Activated B cell treated with CpG ODN at 0.5 μM for 24 hours (primary cell): ENCODE measurements at regions of chr14 and their contacts with region 1.

Region 1: DNA sequence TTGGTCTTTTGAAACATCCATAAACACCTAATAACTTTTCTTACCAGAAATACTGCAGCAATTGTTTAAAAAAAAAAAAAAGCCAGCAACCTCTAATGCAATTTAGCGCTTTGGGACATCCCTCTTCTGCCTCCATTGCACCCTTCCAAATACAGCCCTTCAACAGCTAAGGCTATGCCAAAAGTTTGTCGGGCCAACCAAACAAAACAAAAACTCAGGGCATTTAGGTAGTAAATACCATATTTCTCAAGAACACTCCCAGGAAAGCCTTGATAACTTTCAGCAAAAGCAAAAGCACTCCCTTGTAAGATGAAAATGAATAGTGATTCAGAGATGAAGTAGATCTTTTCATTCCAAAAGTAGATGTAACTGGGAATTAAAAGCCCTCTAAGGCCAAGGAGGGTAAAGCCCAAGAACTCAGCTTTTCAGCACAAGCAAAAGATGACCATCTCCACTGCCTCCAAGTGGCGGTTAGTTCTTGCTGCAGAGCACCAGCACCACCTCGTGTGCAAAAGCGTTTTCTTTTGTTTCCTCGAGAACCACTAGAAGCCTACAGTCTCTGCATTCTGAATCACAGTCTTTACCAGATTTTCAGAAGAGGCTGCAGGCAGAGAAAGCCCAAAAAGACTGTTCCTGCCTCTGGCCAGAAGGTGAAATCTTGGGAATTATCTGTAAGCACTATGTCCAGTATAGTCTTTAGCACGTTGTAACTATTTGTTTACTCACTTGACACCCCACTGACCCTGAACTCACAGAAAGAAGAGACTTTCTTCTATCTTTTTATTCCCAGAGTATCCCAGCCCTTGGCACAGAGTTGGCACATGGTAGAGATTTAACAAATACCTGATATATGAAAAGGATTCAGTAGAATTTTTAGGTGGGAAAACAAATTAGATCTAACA is 53.1 kb downstream of the SIX6 start:
- DNase-seq: no peak
- ATAC-seq: no peak
- H3K4me3 Mint-ChIP-seq: no peak overlapping the region
- H3K27ac Mint-ChIP-seq: no peak overlapping the region
- H3K4me1 Mint-ChIP-seq: peaks cover 4% of the 10 kb centered on the region
- H3K27me3 Mint-ChIP-seq: peaks cover 2% of the 10 kb centered on the region
- CTCF ChIP-seq: no peak

Region 2: DNA sequence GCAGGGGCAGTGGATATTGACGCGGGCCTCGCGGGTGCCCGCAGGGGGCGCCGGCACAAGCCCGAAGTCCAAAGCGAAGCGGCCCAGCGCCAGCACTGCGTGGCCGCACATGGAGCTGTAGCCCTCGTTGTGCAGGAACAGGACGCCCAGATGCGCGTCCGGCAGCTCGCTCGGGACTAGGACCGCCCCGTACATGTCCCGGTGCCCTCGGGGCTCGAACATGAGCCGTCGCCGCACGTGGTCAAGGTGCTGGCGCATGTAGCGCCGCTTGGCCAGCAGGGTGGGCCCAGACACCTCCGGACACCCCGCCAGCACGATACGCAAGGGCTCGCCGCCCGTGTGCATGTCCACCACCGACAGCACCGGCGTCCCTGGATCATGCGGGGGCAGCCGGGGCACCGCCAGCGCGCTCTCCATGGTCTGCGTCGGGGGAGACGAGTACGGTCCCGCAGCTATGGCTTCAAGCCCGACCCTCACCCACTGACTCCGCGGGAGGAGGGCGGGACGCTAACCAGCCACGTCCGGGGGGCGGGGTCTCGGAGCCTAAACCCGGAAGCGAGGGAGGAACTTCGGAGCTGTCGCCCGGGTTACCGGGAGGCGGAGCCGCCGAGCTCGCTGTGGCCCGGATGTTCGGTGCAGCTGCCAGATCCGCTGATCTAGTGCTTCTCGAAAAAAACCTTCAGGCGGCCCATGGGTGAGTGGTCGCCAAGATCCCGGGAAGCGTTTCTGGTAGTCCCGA is 1078.0 kb before region 1 on chr14 and contains the starts of genes JKAMP and L3HYPDH:
- CTCF ChIA-PET with region 1: no interaction called
- POLR2A ChIA-PET with region 1: no interaction called
- intact Hi-C with region 1: no loop called
- DNase-seq: peak; percentile 96
- ATAC-seq: peak; percentile 92
- H3K4me3 Mint-ChIP-seq: peak within 1 kb of the TSS; percentile 98
- H3K27ac Mint-ChIP-seq: peak within 1 kb of the TSS; percentile 96
- H3K4me1 Mint-ChIP-seq: peaks cover 52% of the 10 kb centered on the region
- H3K27me3 Mint-ChIP-seq: no peaks in the 10 kb centered on the region
- CTCF ChIP-seq: no peak
- total RNA-seq, gene JKAMP: 18.1 and 28.8 TPM in 2 replicates
- total RNA-seq, gene L3HYPDH: 22.1 and 30.2 TPM in 2 replicates

Region 3: GRCh38 chr14:59964251-59965007 is 597.7 kb before region 1 on chr14:
- CTCF ChIA-PET with region 1: interaction called, 3 read pairs
- POLR2A ChIA-PET with region 1: no interaction called
- intact Hi-C with region 1: loop called (anchors 2 kb)
- DNase-seq: no peak
- ATAC-seq: peak; percentile 25
- H3K4me3 Mint-ChIP-seq: peak overlapping the region; percentile 86
- H3K27ac Mint-ChIP-seq: peak overlapping the region; percentile 93
- H3K4me1 Mint-ChIP-seq: peaks cover 14% of the 10 kb centered on the region
- H3K27me3 Mint-ChIP-seq: no peaks in the 10 kb centered on the region
- CTCF ChIP-seq: no peak

Region 4: GRCh38 chr14:60064491-60065072 is 497.5 kb before region 1 on chr14:
- CTCF ChIA-PET with region 1: interaction called, 3 read pairs
- POLR2A ChIA-PET with region 1: no interaction called
- intact Hi-C with region 1: loop called (anchors 2 kb)
- DNase-seq: no peak
- ATAC-seq: peak; percentile 57
- H3K4me3 Mint-ChIP-seq: no peak overlapping the region
- H3K27ac Mint-ChIP-seq: no peak overlapping the region
- H3K4me1 Mint-ChIP-seq: no peaks in the 10 kb centered on the region
- H3K27me3 Mint-ChIP-seq: peaks cover 4% of the 10 kb centered on the region
- CTCF ChIP-seq: peak; percentile 54

Region 5: GRCh38 chr14:60195179-60195810 is 366.8 kb before region 1 on chr14:
- CTCF ChIA-PET with region 1: no interaction called
- POLR2A ChIA-PET with region 1: no interaction called
- intact Hi-C with region 1: loop called (anchors 5 kb)
- DNase-seq: no peak
- ATAC-seq: no peak
- H3K4me3 Mint-ChIP-seq: no peak overlapping the region
- H3K27ac Mint-ChIP-seq: no peak overlapping the region
- H3K4me1 Mint-ChIP-seq: no peaks in the 10 kb centered on the region
- H3K27me3 Mint-ChIP-seq: peaks cover 1% of the 10 kb centered on the region
- CTCF ChIP-seq: no peak

Region 6: DNA sequence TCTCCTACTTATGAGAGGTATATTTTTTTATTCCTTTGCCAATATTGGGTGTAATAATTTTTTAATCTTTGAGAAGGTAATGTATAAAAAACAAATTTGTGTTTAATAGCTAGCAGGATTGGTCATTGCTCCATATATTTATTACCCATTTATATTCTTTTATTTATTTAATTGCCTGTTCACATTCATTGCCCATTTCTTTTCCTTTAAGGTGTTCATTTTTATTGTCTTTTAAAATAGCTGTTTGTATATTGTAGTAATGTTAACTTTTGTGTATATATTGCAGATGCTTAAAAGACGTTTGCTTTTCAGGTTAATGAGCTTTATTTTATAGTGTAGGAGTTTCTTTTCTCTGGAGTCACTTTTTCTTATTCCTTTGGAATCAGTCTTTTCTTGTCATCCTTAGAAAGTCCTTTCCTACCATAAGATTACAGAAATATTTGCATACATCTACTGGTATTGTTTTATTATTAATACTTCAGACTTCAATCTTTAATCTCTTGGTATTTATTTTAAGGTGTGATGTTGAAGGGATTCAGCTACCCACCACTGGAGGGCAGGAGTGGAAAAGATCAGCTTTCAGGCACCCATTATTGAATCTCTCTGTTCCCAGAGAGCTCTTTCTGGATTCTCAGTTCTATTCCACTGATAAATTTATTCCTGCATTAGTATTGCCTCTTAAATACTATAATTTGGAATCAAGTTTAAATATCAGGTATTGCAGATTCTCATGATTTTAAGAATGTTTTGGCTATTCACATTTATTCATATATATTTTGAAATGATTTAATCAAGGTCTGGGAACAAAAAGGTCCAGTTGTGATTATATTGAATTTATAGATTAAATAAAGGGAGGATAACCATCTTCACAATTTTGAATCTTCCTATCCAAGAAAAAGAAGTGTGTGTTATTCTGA is 295.8 kb before region 1 on chr14:
- CTCF ChIA-PET with region 1: no interaction called
- POLR2A ChIA-PET with region 1: no interaction called
- intact Hi-C with region 1: loop called (anchors 5 kb)
- DNase-seq: no peak
- ATAC-seq: peak; percentile 54
- H3K4me3 Mint-ChIP-seq: no peak overlapping the region
- H3K27ac Mint-ChIP-seq: no peak overlapping the region
- H3K4me1 Mint-ChIP-seq: peaks cover 22% of the 10 kb centered on the region
- H3K27me3 Mint-ChIP-seq: no peaks in the 10 kb centered on the region
- CTCF ChIP-seq: no peak

Region 7: GRCh38 chr14:60349663-60350365 is 212.3 kb before region 1 on chr14:
- CTCF ChIA-PET with region 1: interaction called, 4 read pairs
- POLR2A ChIA-PET with region 1: no interaction called
- intact Hi-C with region 1: loop called (anchors 1 kb)
- DNase-seq: no peak
- ATAC-seq: no peak
- H3K4me3 Mint-ChIP-seq: no peak overlapping the region
- H3K27ac Mint-ChIP-seq: no peak overlapping the region
- H3K4me1 Mint-ChIP-seq: peaks cover 3% of the 10 kb centered on the region
- H3K27me3 Mint-ChIP-seq: peaks cover 9% of the 10 kb centered on the region
- CTCF ChIP-seq: no peak